ENCODE measurements at regions of chr5 and their contacts with region 1.

Region 1: DNA sequence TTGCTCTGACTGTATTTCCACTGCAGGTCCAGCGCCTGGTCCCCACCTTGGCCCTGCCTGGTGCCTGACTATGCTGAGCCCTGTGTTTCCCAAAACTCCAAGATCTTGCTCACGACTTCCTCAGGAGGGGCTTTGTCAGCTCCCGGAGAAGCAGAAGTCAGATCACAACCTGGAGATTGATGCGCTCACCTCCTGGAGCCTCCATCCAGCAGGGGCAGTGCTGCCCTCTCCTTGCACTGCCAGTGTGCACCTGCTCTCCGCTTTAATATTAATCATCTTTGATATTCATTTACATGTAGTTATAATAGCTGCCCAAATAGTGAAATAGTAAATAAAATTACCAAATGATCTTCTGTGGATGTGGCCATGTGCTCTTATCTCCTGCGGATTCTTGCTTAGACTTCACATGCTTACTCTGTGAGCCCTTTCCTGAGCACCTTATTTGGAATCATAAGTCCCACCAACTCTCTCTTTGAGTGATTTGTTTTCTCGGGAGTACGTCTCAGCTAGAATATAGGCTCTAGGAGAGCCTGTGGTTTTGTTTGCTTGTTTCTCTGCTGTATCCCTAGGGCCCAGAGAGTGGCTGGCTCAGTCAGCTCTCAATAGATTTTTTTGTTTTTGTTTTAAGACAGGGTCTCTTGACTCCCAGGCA is 17.4 kb downstream of the MAML1 start:
- DNase-seq: no peak
- ATAC-seq: peak; percentile 62
- H3K4me3 ChIP-seq: no peak overlapping the region
- H3K27ac ChIP-seq: no peak overlapping the region
- H3K4me1 ChIP-seq: peaks cover 6% of the 10 kb centered on the region; the same call in 1 of the 2 replicates
- H3K27me3 ChIP-seq: no peaks in the 10 kb centered on the region
- CTCF ChIP-seq: no peak

Region 2: DNA sequence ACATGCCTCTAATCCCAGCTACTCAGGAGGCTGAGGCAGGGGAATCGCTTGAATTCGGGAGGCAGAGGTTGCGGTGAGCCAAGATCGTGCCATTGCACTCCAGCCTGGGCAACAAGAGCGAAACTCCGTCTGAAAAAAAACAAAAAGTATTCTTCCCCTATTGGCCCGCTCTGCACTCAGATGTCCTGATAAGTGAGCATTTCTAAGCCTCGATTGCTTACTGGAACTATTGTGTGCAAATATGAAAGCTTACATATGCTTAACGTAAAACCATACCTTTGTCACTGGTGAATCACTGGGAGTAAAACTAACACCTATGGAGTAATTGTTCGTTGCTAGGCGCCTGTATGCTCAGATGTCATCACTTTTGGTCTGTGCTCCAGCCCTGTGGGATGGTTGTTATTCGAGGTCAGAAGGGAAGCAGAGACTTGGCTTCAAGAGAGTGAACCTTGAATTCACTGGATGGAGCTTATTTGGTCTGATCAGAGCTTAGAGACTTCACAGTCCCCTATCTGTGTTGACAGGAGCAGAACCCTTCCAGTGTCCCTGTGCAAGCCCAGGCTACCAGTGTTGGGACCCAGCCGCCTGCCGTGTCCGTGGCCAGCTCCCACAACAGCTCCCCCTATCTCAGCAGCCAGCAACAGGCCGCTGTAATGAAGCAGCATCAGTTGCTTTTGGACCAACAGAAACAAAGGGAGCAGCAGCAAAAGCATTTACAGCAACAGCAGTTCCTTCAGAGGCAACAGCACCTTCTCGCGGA is 18.5 kb after region 1 on chr5:
- CTCF ChIA-PET with region 1: interaction called, 10 read pairs
- POLR2A ChIA-PET with region 1: no interaction called
- in situ Hi-C with region 1: no loop called
- intact Hi-C with region 1: no loop called
- DNase-seq: no peak
- ATAC-seq: no peak
- H3K4me3 ChIP-seq: no peak overlapping the region
- H3K27ac ChIP-seq: no peak overlapping the region
- H3K4me1 ChIP-seq: peaks cover 16% of the 10 kb centered on the region
- H3K27me3 ChIP-seq: no peaks in the 10 kb centered on the region
- CTCF ChIP-seq: no peak

Measured in Panc1 (cell line).